GM12878 (cell line): ENCODE measurements at regions of chr7 and their contacts with region 1.

Region 1: DNA sequence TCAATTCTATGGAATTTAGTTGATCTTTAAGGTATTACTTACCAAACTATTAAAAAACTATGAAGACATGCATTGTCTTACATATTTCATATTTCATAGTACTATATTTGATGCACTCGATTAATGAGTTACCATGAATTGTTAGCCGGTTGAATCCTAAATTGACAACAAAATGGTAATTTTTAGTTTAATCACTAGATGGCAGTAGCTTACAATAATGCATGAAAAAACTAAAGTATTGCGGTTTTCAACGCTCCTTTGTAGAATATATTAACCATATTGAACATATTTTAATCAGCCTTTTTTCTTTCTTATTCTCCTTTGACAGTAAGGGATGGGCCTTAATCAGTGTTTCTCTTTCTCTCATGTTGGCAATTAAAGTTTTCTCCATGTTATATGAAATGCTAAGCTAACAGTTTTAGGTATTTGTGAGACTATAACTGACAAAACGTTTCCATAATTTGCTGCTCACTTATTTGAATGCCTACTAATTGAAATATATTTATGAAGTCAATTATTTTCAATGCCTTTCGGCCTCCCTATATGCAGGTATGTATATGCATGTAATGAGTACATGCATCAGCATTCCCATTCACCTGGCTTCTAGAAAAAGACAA is 48.5 kb upstream of the ARL4A start:
- DNase-seq: no peak
- ATAC-seq: peak; percentile 58
- H3K4me3 ChIP-seq: no peak overlapping the region
- H3K27ac ChIP-seq: no peak overlapping the region
- H3K4me1 ChIP-seq: no peaks in the 10 kb centered on the region
- H3K27me3 ChIP-seq: no peaks in the 10 kb centered on the region
- CTCF ChIP-seq: peak; percentile 35 to 60 (median 50); a peak in 5 of 6 replicates
- EP300 ChIP-seq: no peak
- POLR2A ChIP-seq: no peak
- RAD21 ChIP-seq: peak; percentile 54; the same call in 1 of the 2 replicates

Region 2: GRCh38 chr7:12686894-12687717 is 48.1 kb after region 1 on chr7 and contains the start of gene ARL4A:
- CTCF ChIA-PET with region 1: interaction called, 3 read pairs
- POLR2A ChIA-PET with region 1: no interaction called
- RAD21 ChIA-PET with region 1: no interaction called
- SMC1A ChIA-PET with region 1: no interaction called
- in situ Hi-C with region 1: no loop called
- intact Hi-C with region 1: loop called (anchors 5 kb)
- DNase-seq: peak; percentile 47
- ATAC-seq: peak; percentile 84
- H3K4me3 ChIP-seq: peak within 1 kb of the TSS; percentile 79
- H3K27ac ChIP-seq: no peak within 1 kb of the TSS; the same call in 1 of the 2 replicates
- H3K4me1 ChIP-seq: peaks cover 4% of the 10 kb centered on the region; the same call in 1 of the 2 replicates
- H3K27me3 ChIP-seq: no peaks in the 10 kb centered on the region
- CTCF ChIP-seq: peak in 2 of 3 experiments; percentile 17 to 36; a peak in 3 of 6 replicates
- EP300 ChIP-seq: no peak
- POLR2A ChIP-seq: peak; percentile 31
- RAD21 ChIP-seq: peak; percentile 44; the same call in 1 of the 2 replicates
- polyA plus RNA-seq, gene ARL4A: 1.7 to 2.5 TPM

Region 3: GRCh38 chr7:12706876-12707536 is 68.0 kb after region 1 on chr7:
- CTCF ChIA-PET with region 1: no interaction called
- POLR2A ChIA-PET with region 1: no interaction called
- RAD21 ChIA-PET with region 1: no interaction called
- SMC1A ChIA-PET with region 1: no interaction called
- in situ Hi-C with region 1: no loop called
- intact Hi-C with region 1: no loop called
- DNase-seq: no peak
- ATAC-seq: no peak
- H3K4me3 ChIP-seq: no peak overlapping the region
- H3K27ac ChIP-seq: no peak overlapping the region
- H3K4me1 ChIP-seq: no peaks in the 10 kb centered on the region
- H3K27me3 ChIP-seq: no peaks in the 10 kb centered on the region
- CTCF ChIP-seq: no peak
- EP300 ChIP-seq: no peak
- POLR2A ChIP-seq: no peak
- RAD21 ChIP-seq: no peak

Region 4: GRCh38 chr7:13262929-13263530 is 624.1 kb after region 1 on chr7:
- CTCF ChIA-PET with region 1: interaction called, 16 read pairs
- POLR2A ChIA-PET with region 1: no interaction called
- RAD21 ChIA-PET with region 1: interaction called, 3 read pairs
- SMC1A ChIA-PET with region 1: interaction called, 5 read pairs
- in situ Hi-C with region 1: loop called (anchors 10 kb)
- intact Hi-C with region 1: loop called (anchors 1 kb)
- DNase-seq: no peak
- ATAC-seq: no peak
- H3K4me3 ChIP-seq: no peak overlapping the region
- H3K27ac ChIP-seq: no peak overlapping the region
- H3K4me1 ChIP-seq: no peaks in the 10 kb centered on the region
- H3K27me3 ChIP-seq: no peaks in the 10 kb centered on the region
- CTCF ChIP-seq: peak in 2 of 3 experiments; percentile 13 to 54; a peak in 3 of 6 replicates
- EP300 ChIP-seq: no peak
- POLR2A ChIP-seq: no peak
- RAD21 ChIP-seq: peak; percentile 71

Region 5: GRCh38 chr7:13725591-13725990 is 1086.6 kb after region 1 on chr7:
- CTCF ChIA-PET with region 1: interaction called, 4 read pairs
- POLR2A ChIA-PET with region 1: no interaction called
- RAD21 ChIA-PET with region 1: no interaction called
- SMC1A ChIA-PET with region 1: no interaction called
- in situ Hi-C with region 1: no loop called
- intact Hi-C with region 1: loop called (anchors 5 kb)
- DNase-seq: no peak
- ATAC-seq: no peak
- H3K4me3 ChIP-seq: no peak overlapping the region
- H3K27ac ChIP-seq: no peak overlapping the region
- H3K4me1 ChIP-seq: no peaks in the 10 kb centered on the region
- H3K27me3 ChIP-seq: no peaks in the 10 kb centered on the region
- CTCF ChIP-seq: no peak
- EP300 ChIP-seq: no peak
- POLR2A ChIP-seq: no peak
- RAD21 ChIP-seq: no peak